AG04450 (cell line): ENCODE measurements at regions of chr10 and their contacts with region 1.

Region 1: DNA sequence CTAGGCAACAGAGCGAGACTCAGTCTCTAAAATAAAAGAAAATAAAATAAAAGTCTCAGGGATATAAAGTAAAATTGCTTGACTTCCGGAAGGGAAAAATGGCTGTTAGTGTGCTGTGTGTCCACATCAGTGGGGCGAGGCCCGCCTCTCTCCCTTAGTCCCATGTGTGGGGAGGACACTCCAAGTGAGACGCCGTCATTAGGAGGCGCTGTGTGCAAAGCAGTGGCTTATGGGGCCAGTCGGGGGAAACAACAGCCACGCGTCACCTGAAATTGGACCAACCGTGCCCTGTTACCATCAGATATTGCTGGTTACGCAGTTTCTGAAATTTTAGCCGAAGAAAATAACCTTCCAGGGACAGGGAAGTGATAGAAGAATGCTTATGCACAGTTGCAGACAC is 15.8 kb downstream of the SFXN4 start:
- DNase-seq: no peak
- H3K4me3 ChIP-seq: no peak overlapping the region
- H3K27ac ChIP-seq: no peak overlapping the region
- H3K27me3 ChIP-seq: no peaks in the 10 kb centered on the region
- CTCF ChIP-seq: 0 out of 2 replicates have a peak, but pooled peaks have one; percentile 7

Region 2: DNA sequence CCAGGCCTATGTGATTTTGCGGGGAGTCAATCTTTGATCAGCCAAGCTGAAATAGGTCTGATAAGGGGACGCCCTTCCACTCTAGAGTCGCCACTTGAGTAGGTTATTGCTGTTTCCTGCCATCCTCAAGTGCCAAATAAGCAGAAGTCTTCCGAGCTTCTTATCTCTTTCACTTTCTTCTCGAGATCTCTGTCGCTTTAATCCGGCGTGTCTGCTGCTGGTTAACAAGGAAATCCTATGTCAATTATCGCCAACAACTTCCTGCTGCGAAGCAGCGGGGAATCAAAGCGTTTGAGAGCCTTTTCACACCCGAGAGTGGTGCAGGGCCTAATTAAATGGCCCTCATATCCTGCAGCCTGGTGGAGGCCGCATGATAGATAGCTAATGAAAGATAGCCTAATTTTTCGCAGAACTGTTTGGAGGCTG is 1318.9 kb before region 1 on chr10:
- CTCF ChIA-PET with region 1: no interaction called
- POLR2A ChIA-PET with region 1: no interaction called
- DNase-seq: no peak
- H3K4me3 ChIP-seq: no peak overlapping the region
- H3K27ac ChIP-seq: no peak overlapping the region
- H3K27me3 ChIP-seq: no peaks in the 10 kb centered on the region
- CTCF ChIP-seq: no peak

Region 3: GRCh38 chr10:119165171-119166110 is 15.7 kb after region 1 on chr10 and contains the start of gene SFXN4:
- CTCF ChIA-PET with region 1: interaction called, 10 read pairs
- POLR2A ChIA-PET with region 1: interaction called, 7 read pairs
- DNase-seq: no peak
- H3K4me3 ChIP-seq: peak within 1 kb of the TSS; percentile 73
- H3K27ac ChIP-seq: peak within 1 kb of the TSS; percentile 47
- H3K27me3 ChIP-seq: no peaks in the 10 kb centered on the region
- CTCF ChIP-seq: no peak
- polyA plus RNA-seq, gene SFXN4: 14.3 and 17.1 TPM in 2 replicates

Region 4: GRCh38 chr10:119178372-119179119 is 28.8 kb after region 1 on chr10 and contains the start of gene PRDX3:
- CTCF ChIA-PET with region 1: no interaction called
- POLR2A ChIA-PET with region 1: no interaction called
- DNase-seq: no peak
- H3K4me3 ChIP-seq: peak within 1 kb of the TSS; percentile 99
- H3K27ac ChIP-seq: peak within 1 kb of the TSS; percentile 92
- H3K27me3 ChIP-seq: no peaks in the 10 kb centered on the region
- CTCF ChIP-seq: no peak
- polyA plus RNA-seq, gene PRDX3: 296 and 373 TPM in 2 replicates